H1 (cell line): ENCODE measurements at regions of chr14 and their contacts with region 1.

Region 1: DNA sequence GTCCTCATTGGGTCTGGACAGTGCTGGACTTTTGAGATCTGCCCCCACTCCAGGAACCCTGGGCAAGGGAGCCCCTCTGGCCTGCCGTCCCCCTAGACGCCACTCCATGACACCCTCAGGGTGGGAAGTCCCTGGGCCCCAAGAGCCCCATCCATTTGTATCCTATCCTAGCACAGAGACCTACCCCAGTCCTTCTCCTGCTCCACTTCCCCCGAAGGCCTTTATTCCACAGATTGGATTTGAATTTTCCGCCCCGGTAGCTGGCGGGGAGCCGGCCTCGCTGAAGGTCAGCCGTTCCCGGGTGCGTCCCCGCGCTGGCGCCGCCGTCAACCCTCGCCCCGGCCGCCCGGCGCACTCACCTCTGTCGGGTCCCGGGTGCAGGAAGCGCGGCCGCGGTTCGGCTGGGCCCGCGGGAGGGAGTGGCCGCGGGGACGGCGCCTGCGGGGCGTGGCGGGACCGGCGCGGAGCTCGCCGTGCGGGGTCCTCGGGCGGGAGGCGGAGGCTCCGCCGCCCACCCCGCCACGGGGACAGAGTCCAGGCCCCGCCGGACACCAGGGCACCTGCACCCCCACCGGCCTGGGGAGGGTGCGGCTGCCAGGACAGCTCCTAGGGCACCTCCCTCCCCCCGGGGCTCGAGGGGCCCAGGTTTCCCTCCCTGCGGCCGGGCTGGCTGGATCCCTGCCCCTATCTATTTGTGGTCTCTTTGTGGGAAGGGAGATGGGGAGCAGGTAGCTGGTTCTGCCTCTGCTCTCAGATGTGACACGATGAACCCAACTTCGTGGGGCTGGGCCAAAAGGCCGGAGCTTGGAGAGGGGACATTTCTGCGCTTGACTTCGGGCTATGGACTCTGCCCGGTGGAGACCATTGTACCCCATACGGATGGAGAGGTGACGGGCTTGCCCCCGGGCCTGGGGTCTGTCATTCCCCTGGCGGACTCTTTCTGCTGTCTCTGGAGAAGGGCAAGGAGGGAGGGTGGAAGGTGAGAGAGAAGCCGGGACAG is 19.9 kb upstream of the GPR68 start:
- DNase-seq: peak in 1 of 2 experiments; percentile 71
- H3K4me3 ChIP-seq: peak overlapping the region; percentile 39 to 64 (median 54)
- H3K27ac ChIP-seq: no peak overlapping the region
- H3K4me1 ChIP-seq: peaks cover 0 to 6% (median 1%) of the 10 kb centered on the region in 4 experiments; a peak in 6 of 7 replicates
- H3K27me3 ChIP-seq: peaks cover 0 to 27% (median 21%) of the 10 kb centered on the region in 4 experiments; a peak in 6 of 7 replicates
- CTCF ChIP-seq: no peak
- EP300 ChIP-seq: no peak
- POLR2A ChIP-seq: no peak
- RAD21 ChIP-seq: no peak

Region 2: GRCh38 chr14:91114079-91115065 is 150.1 kb before region 1 on chr14:
- CTCF ChIA-PET with region 1: no interaction called
- POLR2A ChIA-PET with region 1: no interaction called
- DNase-seq: peak; percentile 81 to 88
- H3K4me3 ChIP-seq: peak overlapping the region; percentile 20 to 55 (median 32); a peak in 7 of 8 replicates
- H3K27ac ChIP-seq: peak overlapping the region; percentile 90
- H3K4me1 ChIP-seq: peaks cover 12 to 32% (median 19%) of the 10 kb centered on the region in 4 experiments
- H3K27me3 ChIP-seq: no peaks in the 10 kb centered on the region
- CTCF ChIP-seq: no peak
- EP300 ChIP-seq: peak in 1 of 2 experiments; percentile 7; a peak in 1 of 3 replicates
- POLR2A ChIP-seq: peak; percentile 66 to 75; a peak in 2 of 3 replicates
- RAD21 ChIP-seq: no peak; a peak in 1 of 4 replicates

Region 3: DNA sequence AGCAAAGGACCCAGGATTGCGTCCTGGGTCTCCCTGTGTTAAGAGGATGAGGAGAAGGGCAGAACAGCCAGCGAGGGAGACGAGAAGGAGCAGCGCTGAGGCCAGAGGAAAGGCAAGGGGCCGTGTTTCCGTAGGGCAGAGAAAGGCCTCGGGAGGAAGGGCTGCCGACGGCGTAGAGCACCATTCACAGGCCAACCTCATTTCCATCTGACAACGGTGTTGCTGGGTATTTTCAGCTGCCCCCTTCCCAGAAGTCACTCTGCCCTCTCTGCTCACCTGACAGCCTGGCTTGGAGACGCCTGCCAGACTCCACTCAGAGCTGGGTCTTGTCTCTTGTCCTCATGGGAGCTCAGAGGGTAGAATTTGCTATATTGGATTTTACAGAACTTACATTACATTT is 71.4 kb before region 1 on chr14:
- CTCF ChIA-PET with region 1: no interaction called
- POLR2A ChIA-PET with region 1: no interaction called
- DNase-seq: no peak
- H3K4me3 ChIP-seq: no peak overlapping the region
- H3K27ac ChIP-seq: no peak overlapping the region
- H3K4me1 ChIP-seq: no peaks in the 10 kb centered on the region; a peak in 1 of 7 replicates
- H3K27me3 ChIP-seq: no peaks in the 10 kb centered on the region
- CTCF ChIP-seq: no peak
- EP300 ChIP-seq: no peak
- POLR2A ChIP-seq: no peak
- RAD21 ChIP-seq: no peak

Region 4: GRCh38 chr14:91249841-91250616 is 14.4 kb before region 1 on chr14:
- CTCF ChIA-PET with region 1: interaction called, 10 read pairs
- POLR2A ChIA-PET with region 1: interaction called, 15 read pairs
- DNase-seq: no peak
- H3K4me3 ChIP-seq: no peak overlapping the region
- H3K27ac ChIP-seq: no peak overlapping the region
- H3K4me1 ChIP-seq: peaks cover 0 to 10% (median 8%) of the 10 kb centered on the region in 4 experiments; a peak in 6 of 7 replicates
- H3K27me3 ChIP-seq: peaks cover 0 to 16% (median 9%) of the 10 kb centered on the region in 4 experiments; a peak in 6 of 7 replicates
- CTCF ChIP-seq: no peak
- EP300 ChIP-seq: no peak
- POLR2A ChIP-seq: no peak
- RAD21 ChIP-seq: no peak

Region 5: GRCh38 chr14:91311284-91311662 is 46.8 kb after region 1 on chr14:
- CTCF ChIA-PET with region 1: no interaction called
- POLR2A ChIA-PET with region 1: no interaction called
- DNase-seq: no peak
- H3K4me3 ChIP-seq: no peak overlapping the region
- H3K27ac ChIP-seq: no peak overlapping the region
- H3K4me1 ChIP-seq: peaks cover 4 to 10% (median 7%) of the 10 kb centered on the region in 4 experiments; a peak in 6 of 7 replicates
- H3K27me3 ChIP-seq: no peaks in the 10 kb centered on the region
- CTCF ChIP-seq: no peak
- EP300 ChIP-seq: no peak
- POLR2A ChIP-seq: no peak
- RAD21 ChIP-seq: no peak